Sigmoid colon (tissue), 7 donors: ENCODE measurements at regions of chr3 and their contacts with region 1.

Region 1: DNA sequence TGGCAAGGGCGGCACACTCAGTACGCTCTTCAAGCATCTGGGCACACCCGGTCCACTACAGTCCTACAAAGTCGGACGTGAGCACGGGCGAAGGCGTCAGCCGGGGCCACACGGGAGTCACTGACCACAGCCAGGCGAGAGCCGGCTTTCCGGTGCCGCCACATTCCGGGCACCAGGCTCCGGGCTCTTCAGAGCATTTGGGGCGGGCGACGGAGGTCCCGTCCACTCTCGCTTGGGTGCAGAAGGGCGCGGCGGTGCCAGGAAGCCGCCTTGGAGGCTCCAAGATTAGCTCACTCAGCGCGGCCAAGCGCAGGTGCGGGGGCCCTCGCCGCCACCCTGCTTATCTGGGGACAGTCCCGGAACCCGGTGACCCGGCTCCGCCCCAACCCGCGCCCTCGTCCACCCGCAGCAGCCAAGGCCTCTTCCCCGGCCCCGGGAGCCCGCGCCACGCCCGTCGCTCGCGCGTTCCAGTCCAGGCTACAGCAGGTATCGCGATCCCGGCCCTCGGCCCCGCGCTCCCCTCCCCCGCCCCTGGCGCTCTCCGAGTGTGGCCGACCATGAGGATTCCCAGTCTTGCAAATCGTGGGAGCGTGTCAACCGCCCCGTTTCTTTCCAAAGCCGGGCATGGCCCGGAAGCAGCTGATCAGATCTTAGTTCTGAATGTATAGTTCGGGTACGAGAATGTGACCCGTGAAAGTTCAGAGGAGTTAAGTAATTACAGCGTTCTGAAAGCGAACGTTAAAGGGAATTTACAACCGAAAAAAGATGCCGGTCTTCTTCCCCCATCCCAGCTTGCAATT is at the start of gene ADPRH:
- DNase-seq: peak; percentile 85
- H3K4me3 ChIP-seq: peak within 1 kb of the TSS; percentile 53 to 75 (median 68)
- H3K27ac ChIP-seq: peak within 1 kb of the TSS; percentile 90 to 95 (median 92)
- H3K4me1 ChIP-seq: peaks cover 0 to 18% (median 10%) of the 10 kb centered on the region in 4 donors
- H3K27me3 ChIP-seq: no peaks in the 10 kb centered on the region
- CTCF ChIP-seq: no peak
- EP300 ChIP-seq: no peak
- POLR2A ChIP-seq: no peak
- total RNA-seq, gene ADPRH: 6.3 to 11.6 (median 9.7) TPM

Region 2: GRCh38 chr3:119542168-119542767 is 37.3 kb before region 1 on chr3:
- intact Hi-C with region 1: no loop called
- DNase-seq: no peak
- H3K4me3 ChIP-seq: no peak overlapping the region
- H3K27ac ChIP-seq: no peak overlapping the region
- H3K4me1 ChIP-seq: no peaks in the 10 kb centered on the region
- H3K27me3 ChIP-seq: no peaks in the 10 kb centered on the region
- CTCF ChIP-seq: no peak
- EP300 ChIP-seq: no peak
- POLR2A ChIP-seq: no peak

Region 3: DNA sequence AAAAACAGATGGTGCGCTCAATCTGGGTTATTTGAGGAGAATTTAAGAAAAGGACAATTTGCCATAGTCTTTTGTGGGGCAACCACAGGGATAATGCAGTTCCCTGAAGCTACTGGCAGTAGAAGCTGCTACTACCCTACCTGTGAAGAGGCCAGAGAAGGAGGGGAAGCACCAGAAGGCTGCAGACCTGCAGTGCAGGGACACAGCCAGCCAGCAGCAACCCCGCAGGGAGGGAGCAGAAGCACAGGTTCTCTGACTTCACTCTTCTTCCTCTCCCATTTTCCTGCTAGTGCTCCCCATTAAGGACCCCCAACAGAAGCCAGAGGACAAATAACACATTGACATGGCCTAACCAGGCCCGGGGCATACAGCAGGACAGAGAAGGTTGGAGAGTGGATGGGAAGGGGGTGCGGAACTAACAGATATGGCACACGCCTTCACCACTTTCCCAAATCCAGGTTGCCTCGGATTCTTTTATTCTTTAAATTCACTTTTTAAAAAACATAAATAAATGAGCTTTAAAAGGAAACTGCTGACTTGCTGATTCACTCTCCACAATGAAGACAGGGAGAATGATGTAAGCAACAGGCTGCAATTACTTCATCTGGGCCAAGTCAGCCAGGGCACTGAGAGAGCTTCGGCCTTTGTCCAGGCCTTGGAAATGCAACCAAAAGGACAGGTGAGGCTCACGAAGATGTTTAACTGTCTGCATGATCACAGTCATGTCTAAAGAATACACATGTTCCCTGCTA is 50.7 kb after region 1 on chr3:
- intact Hi-C with region 1: loop called (anchors 5 kb)
- DNase-seq: no peak
- H3K4me3 ChIP-seq: no peak overlapping the region
- H3K27ac ChIP-seq: peak overlapping the region in 3 of 4 donors; percentile 23 to 68 (median 54)
- H3K4me1 ChIP-seq: peaks cover 0 to 31% (median 9%) of the 10 kb centered on the region in 4 donors
- H3K27me3 ChIP-seq: no peaks in the 10 kb centered on the region
- CTCF ChIP-seq: no peak
- EP300 ChIP-seq: no peak
- POLR2A ChIP-seq: no peak

Region 4: DNA sequence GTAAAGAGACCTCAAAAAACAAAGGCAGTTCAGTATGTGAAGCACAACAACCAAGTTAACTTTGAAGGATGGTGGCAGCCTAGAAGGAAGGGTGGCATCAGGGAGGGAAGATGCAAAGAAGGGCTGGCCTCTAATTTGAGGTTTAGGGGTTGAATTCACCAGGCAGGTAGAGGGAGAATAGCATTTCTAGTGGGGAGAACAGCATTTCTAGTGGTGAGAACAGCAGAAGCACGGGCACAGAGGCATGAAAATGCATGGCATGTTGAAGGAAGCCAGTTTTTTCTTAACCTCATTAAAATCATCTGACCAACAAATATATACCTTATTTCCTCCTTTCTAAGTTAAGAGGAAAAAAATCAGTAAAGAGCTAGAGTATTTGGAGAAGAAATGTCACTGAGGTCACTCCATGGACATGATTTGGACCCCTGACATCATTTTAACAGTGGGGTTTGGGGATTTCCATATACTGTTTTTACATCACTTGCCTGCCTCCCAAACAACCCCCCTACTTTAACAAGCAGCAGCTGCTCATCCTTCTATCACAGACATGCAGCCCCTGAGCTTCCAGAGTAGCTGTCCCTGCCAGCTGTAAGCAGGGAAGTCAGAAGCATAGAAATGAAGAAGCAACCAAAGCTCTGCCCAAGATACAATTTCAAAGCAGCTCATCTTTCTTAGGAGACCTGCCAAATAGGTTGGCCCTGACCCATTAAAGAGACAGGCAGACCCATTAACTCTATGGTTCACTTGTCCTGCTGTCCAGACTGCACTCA is 83.2 kb after region 1 on chr3:
- intact Hi-C with region 1: loop called (anchors 5 kb)
- DNase-seq: no peak
- H3K4me3 ChIP-seq: peak overlapping the region in 2 of 4 donors; percentile 2 to 4
- H3K27ac ChIP-seq: peak overlapping the region; percentile 70 to 91 (median 89)
- H3K4me1 ChIP-seq: peaks cover 0 to 60% (median 54%) of the 10 kb centered on the region in 4 donors
- H3K27me3 ChIP-seq: no peaks in the 10 kb centered on the region
- CTCF ChIP-seq: peak in 3 of 4 experiments; percentile 39 to 67 (median 43)
- EP300 ChIP-seq: no peak
- POLR2A ChIP-seq: peak in 1 of 2 donors; percentile 7

Region 5: DNA sequence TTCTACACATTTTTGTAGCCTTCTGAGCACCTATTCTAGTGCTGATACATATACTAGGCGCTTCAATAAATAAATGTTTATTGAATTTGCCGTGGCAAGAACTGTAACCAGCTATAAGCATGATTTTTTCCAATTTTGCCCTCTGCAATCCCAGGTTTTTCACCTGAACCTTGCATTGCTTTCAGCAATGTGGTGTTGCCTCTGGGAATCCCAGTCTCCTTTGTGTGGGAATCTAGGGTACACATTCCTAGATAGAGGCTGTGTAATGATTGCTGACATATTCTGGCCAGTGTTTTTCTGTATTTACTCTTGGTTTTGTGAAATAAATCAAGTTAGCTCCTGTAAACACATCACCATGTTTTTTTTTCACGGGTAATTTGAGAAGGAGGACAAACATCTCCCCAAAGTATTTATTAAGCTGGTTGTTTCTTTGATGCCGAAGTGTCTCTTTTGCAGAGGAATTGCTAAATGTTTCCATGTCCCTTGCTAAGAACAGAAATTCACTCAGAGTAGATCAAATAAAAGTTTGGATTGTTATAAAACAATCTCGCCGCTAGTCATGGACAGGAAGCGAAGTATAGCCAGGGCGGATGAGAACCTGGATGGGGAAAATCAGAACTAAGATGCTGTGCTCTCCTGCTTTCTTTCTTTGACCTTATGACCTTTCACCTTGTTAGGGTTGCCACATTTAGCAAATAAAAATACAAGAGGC is 124.4 kb after region 1 on chr3:
- intact Hi-C with region 1: no loop called
- DNase-seq: no peak
- H3K4me3 ChIP-seq: peak overlapping the region in 3 of 4 donors; percentile 4 to 64 (median 64)
- H3K27ac ChIP-seq: peak overlapping the region; percentile 47 to 71 (median 56)
- H3K4me1 ChIP-seq: peaks cover 0 to 17% (median 13%) of the 10 kb centered on the region in 4 donors
- H3K27me3 ChIP-seq: no peaks in the 10 kb centered on the region
- CTCF ChIP-seq: no peak
- EP300 ChIP-seq: no peak
- POLR2A ChIP-seq: no peak